ENCODE measurements at regions of chr19 and their contacts with region 1.

Region 1: GRCh38 chr19:46016426-46017094 is 6.3 kb downstream of the PGLYRP1 start:
- DNase-seq: peak; percentile 90
- ATAC-seq: peak; percentile 73
- H3K4me3 Mint-ChIP-seq: peak overlapping the region; percentile 66
- H3K27ac Mint-ChIP-seq: no peak overlapping the region
- H3K4me1 Mint-ChIP-seq: peaks cover 16% of the 10 kb centered on the region
- H3K27me3 Mint-ChIP-seq: peaks cover 14% of the 10 kb centered on the region

Region 2: GRCh38 chr19:45817010-45817724 is 199.4 kb before region 1 on chr19:
- CTCF ChIA-PET with region 1: no interaction called
- POLR2A ChIA-PET with region 1: no interaction called
- intact Hi-C with region 1: loop called (anchors 2 to 10 kb)
- DNase-seq: peak; percentile 99
- ATAC-seq: peak; percentile 100
- H3K4me3 Mint-ChIP-seq: no peak overlapping the region
- H3K27ac Mint-ChIP-seq: no peak overlapping the region
- H3K4me1 Mint-ChIP-seq: peaks cover 7% of the 10 kb centered on the region
- H3K27me3 Mint-ChIP-seq: peaks cover 10% of the 10 kb centered on the region

Region 3: DNA sequence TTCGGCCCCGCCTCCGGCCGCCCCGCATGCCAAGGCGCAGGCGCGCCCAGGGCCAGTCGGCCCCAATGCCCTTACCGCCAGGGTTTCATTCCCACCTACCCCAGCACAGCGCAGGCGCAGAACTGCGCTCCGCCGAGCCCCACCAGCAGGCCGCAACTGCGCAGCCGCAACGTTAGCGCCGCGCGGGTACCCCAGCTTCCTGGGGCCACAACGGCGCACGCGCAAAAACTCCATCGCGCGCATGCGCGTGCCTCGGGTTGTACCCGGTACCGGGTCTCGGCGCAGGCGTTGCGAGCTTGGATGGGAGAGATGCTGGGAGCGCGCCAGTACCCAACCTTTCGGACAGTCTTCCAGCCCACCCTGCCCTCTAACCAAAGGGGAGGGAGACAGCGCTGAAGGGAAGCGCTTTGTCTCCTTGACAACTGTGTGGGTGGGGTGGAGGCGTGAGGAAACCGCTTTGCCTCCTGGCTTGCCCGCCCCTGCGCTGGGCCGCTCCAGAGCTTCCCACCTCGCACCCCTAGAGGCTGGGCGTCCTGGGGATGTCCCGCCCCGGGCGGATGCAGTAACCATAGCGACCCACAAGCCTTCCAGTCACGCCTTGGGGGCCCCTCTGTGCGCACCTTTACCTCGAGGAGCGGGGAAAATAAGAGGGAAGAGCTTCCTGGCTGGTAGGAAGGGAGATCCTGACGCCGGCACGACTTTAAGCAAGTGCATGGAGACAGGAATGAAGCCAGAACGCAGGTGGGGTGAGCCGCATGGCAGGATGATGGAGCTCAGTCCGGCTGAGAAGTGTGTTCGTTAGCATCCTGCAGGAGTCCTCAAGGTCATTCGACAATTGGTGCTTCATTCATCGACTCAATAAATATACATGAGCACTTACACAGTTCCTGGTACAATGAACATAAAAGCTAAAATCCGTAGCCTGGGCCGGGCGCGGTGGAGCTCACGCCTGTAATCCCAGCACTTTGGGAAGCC is 113.6 kb before region 1 on chr19:
- CTCF ChIA-PET with region 1: interaction called, 7 read pairs
- POLR2A ChIA-PET with region 1: no interaction called
- intact Hi-C with region 1: loop called in 1 of 2 experiments (anchors 1 kb)
- DNase-seq: peak; percentile 100
- ATAC-seq: peak; percentile 88
- H3K4me3 Mint-ChIP-seq: peak overlapping the region; percentile 88
- H3K27ac Mint-ChIP-seq: peak overlapping the region; percentile 75
- H3K4me1 Mint-ChIP-seq: peaks cover 16% of the 10 kb centered on the region
- H3K27me3 Mint-ChIP-seq: no peaks in the 10 kb centered on the region

Region 4: DNA sequence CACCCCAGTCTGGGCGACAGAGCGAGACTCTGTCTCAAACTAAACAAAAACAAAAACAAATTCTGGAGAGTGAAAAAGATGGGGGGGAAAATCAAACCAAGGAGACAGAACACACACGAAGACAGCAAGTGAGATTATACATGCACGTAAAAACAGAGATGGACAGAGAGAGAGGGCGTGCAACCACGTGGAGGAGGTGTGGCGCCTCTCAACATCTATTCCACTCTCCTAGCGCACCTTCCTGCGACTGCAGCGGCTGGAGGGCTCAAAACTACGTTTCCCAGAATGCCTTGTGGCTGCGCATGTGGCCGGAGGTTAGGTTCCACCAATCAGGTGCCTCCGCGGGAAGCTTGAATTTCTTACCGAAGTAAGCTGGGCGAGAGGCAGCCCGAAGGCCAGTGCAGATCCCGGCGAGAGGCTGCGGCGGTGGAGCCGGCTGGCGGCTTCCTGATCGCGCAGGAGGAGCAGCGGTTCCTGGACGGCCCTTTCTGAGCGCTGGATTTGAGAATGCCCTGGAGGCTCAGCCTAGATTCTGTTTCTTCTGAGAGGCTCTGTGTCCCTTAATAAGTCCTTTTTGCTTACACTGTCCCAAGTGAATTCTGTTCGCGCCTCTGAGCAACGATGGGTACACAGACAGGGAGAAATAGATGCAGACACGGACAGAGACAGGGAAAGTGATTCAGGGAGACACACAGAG is 88.8 kb before region 1 on chr19:
- CTCF ChIA-PET with region 1: interaction called, 3 read pairs
- POLR2A ChIA-PET with region 1: no interaction called
- intact Hi-C with region 1: loop called in 1 of 2 experiments (anchors 1 kb)
- DNase-seq: peak; percentile 96
- ATAC-seq: peak; percentile 100
- H3K4me3 Mint-ChIP-seq: peak overlapping the region; percentile 56
- H3K27ac Mint-ChIP-seq: peak overlapping the region; percentile 68
- H3K4me1 Mint-ChIP-seq: peaks cover 12% of the 10 kb centered on the region
- H3K27me3 Mint-ChIP-seq: peaks cover 7% of the 10 kb centered on the region

Region 5: DNA sequence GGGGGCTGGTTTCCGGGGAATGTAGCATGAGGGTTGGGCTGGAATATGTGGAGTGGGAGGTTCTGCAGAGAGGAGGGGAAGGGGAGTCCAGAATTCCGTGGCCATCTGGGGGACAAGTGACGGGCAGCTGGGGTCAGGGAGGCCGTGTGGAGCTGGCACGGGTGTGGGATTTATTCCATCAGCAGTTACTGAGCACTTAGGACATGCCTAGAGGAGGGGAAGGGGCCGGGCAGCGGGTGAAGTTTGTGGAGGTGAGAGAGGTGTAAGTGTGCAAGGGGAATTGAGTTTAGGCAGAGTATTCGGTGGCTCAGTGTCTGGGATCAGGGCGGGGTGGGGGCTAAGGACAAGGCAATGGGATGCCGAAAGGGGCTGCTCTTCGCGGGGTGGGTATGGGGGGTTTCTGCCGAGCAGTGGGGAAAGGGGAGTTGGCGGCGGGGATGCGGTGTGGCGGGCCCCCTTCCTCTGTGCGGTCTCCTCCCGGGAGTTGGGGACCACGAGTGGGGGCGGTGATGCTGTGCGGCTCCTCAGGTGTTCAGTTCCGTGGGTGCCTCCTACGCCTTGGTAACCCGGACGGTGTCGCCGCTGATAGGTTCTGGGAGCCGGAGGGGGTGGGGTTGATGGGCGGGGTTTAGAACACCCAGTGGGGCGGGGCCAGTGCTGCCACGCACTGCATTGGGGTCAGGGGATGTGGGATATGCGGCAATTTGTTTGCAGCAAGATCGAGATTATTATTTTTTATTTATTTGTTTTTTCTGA is 15.9 kb before region 1 on chr19:
- CTCF ChIA-PET with region 1: interaction called, 4 read pairs
- POLR2A ChIA-PET with region 1: no interaction called
- intact Hi-C with region 1: loop called in 1 of 2 experiments (anchors 1 kb)
- DNase-seq: peak; percentile 84
- ATAC-seq: peak; percentile 92
- H3K4me3 Mint-ChIP-seq: peak overlapping the region; percentile 56
- H3K27ac Mint-ChIP-seq: no peak overlapping the region
- H3K4me1 Mint-ChIP-seq: peaks cover 31% of the 10 kb centered on the region
- H3K27me3 Mint-ChIP-seq: peaks cover 5% of the 10 kb centered on the region

Region 6: GRCh38 chr19:46030812-46031550 is 14.4 kb after region 1 on chr19:
- CTCF ChIA-PET with region 1: interaction called, 12 read pairs
- POLR2A ChIA-PET with region 1: interaction called, 4 read pairs
- intact Hi-C with region 1: no loop called
- DNase-seq: no peak
- ATAC-seq: no peak
- H3K4me3 Mint-ChIP-seq: no peak overlapping the region
- H3K27ac Mint-ChIP-seq: no peak overlapping the region
- H3K4me1 Mint-ChIP-seq: peaks cover 12% of the 10 kb centered on the region
- H3K27me3 Mint-ChIP-seq: peaks cover 8% of the 10 kb centered on the region

Measured in activated CD4-positive, alpha-beta T cell treated with anti-CD3 and anti-CD28 coated beads for 36 hours (primary cell).